Activated naive CD4-positive, alpha-beta T cell treated with anti-CD3 and anti-CD28 coated beads for 36 hours (primary cell): ENCODE measurements at regions of chr18 and their contacts with region 1.

Region 1: GRCh38 chr18:36942264-36942663 is 113.3 kb downstream of the KIAA1328 start:
- DNase-seq: peak; percentile 22
- H3K4me3 Mint-ChIP-seq: no peak overlapping the region
- H3K27ac Mint-ChIP-seq: no peak overlapping the region
- H3K4me1 Mint-ChIP-seq: no peaks in the 10 kb centered on the region
- H3K27me3 Mint-ChIP-seq: no peaks in the 10 kb centered on the region

Region 2: DNA sequence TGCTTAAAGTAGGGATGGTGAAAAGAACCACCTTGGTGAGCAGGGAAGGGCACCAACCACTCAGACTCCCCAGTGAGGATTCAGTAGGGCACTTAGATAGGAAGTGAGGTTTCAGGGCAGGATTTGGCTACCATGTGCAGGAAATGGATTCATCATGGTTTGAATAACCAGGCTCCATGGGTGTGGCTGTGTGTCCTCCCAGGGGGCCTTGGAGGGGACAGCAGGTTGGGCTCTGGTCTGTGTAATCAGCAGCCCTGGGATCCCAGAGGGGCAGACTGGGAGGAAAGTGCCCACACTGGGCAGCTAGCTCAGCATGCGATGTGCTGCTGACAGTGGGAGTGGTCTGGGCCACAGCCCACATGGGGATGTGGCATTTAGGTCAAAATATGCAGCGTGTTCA is 398.8 kb after region 1 on chr18:
- CTCF ChIA-PET with region 1: no interaction called
- intact Hi-C with region 1: loop called (anchors 2 kb)
- DNase-seq: no peak
- H3K4me3 Mint-ChIP-seq: no peak overlapping the region
- H3K27ac Mint-ChIP-seq: no peak overlapping the region
- H3K4me1 Mint-ChIP-seq: no peaks in the 10 kb centered on the region
- H3K27me3 Mint-ChIP-seq: peaks cover 9% of the 10 kb centered on the region

Region 3: DNA sequence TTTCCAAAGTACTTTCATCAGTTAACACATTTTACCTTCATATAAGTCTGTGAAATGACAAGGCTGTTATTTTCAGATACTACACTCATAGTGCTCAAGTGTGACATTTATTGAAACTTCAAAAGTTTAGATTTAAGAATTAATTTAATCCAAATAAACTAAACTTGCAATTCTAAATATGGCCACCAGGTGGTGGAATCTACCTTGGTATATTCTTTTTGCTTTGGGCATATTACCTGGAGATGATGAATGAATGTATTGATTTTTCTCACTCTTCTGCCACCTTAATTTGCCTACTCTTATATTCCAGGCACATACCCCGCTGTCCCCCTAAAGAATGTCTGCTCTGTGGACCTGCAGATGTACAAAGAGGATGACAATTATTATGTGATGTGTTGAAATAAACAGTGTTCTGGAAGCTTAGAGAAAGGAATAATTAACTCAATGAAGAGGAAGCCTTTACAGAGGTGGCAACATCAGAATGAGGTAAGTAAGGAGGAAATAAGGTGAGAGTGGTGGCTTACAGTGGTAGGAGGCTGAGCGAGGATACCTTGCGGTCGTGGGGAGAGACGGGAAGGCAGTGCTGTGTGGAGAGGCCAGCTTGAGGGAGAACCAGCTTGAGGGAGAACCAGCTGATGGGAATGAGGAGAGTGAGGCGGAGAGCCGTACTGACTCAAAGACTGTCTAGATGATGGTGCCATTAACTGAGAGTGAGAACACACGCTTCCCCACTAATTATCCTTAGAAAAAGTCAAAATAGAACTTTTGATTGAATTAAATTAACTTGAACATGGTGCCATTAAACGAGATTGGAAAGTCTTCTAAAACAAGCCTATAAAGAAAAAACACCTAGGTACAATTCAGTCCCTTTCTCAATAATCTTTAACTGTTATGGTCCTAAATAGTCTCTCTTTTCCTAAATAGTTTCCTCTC is 443.8 kb after region 1 on chr18:
- CTCF ChIA-PET with region 1: no interaction called
- intact Hi-C with region 1: loop called (anchors 5 kb)
- DNase-seq: no peak
- H3K4me3 Mint-ChIP-seq: no peak overlapping the region
- H3K27ac Mint-ChIP-seq: no peak overlapping the region
- H3K4me1 Mint-ChIP-seq: no peaks in the 10 kb centered on the region
- H3K27me3 Mint-ChIP-seq: peaks cover 5% of the 10 kb centered on the region

Region 4: DNA sequence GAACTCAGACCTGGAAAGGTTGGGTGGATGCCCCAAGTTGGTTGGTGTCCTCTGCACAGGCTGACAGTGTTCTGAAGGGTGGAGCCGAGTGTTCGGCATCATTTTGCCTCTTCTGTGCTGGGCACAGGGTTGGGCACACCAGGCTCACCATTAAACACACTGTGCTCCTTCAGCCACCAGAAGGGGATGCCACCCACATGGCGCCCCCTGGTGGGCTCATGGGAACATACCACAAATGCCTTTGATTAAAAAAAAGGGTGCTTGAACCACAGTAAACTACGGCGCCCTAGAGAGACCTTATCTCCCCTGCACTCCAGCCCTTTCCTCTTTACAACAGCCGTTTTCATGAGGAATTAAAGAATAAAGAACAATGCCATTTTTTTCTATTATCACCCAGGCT is 533.9 kb after region 1 on chr18:
- CTCF ChIA-PET with region 1: no interaction called
- intact Hi-C with region 1: loop called (anchors 2 kb)
- DNase-seq: peak; percentile 20
- H3K4me3 Mint-ChIP-seq: no peak overlapping the region
- H3K27ac Mint-ChIP-seq: no peak overlapping the region
- H3K4me1 Mint-ChIP-seq: no peaks in the 10 kb centered on the region
- H3K27me3 Mint-ChIP-seq: peaks cover 16% of the 10 kb centered on the region